ENCODE measurements at regions of chr16 and their contacts with region 1.

Region 1: GRCh38 chr16:85610508-85611332 is 2.4 kb upstream of the GSE1 start:
- DNase-seq: peak; percentile 90
- H3K4me3 Mint-ChIP-seq: peak overlapping the region; percentile 63
- H3K27ac Mint-ChIP-seq: peak overlapping the region; percentile 19
- H3K4me1 Mint-ChIP-seq: peaks cover 16% of the 10 kb centered on the region
- H3K27me3 Mint-ChIP-seq: no peaks in the 10 kb centered on the region
- CTCF ChIP-seq: peak; percentile 96

Region 2: GRCh38 chr16:85275533-85276249 is 335.0 kb before region 1 on chr16:
- CTCF ChIA-PET with region 1: interaction called, 41 read pairs
- POLR2A ChIA-PET with region 1: no interaction called
- intact Hi-C with region 1: loop called (anchors 1 kb)
- DNase-seq: peak; percentile 70
- H3K4me3 Mint-ChIP-seq: no peak overlapping the region
- H3K27ac Mint-ChIP-seq: no peak overlapping the region
- H3K4me1 Mint-ChIP-seq: no peaks in the 10 kb centered on the region
- H3K27me3 Mint-ChIP-seq: no peaks in the 10 kb centered on the region
- CTCF ChIP-seq: peak; percentile 89

Region 3: DNA sequence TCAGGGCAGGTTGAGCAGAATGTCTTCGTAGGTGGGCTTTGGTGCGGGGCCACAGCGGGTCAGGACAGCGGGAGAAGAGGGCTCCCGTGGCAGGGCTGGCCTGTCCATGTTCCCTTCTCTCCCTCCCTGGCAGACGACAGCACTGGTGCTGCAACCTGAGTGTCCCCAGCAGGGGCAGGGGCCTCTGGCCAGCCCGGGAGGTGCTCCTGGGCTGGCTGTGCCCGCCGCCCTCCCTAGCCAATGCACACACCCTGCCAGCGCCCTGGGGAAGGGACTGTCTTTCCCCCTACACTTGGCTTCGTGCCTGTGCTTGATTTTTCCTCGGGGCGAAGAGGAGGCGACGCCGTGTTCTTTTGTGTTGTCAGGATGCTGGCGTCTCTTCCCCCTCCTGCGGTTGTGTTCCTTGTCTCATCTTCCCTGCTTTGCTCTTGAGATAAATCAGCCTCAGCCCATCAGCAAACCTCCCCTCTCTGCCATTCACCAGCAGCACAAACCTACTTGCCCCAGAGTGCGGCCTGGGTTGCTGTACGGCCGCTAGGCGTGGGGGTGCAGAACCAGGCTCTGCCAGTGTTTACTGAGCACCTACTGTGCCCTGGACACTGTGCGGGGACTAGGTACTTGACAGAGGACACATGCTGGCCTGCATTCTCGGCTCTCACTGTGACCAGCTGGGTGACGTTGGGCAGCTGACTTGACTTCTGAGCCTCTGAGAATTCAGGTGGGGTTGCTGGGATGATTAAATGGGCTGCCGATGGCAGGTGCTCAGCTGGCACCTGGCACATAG is 261.2 kb before region 1 on chr16:
- CTCF ChIA-PET with region 1: no interaction called
- POLR2A ChIA-PET with region 1: interaction called, 3 read pairs
- intact Hi-C with region 1: loop called (anchors 2 kb)
- DNase-seq: no peak
- H3K4me3 Mint-ChIP-seq: no peak overlapping the region
- H3K27ac Mint-ChIP-seq: no peak overlapping the region
- H3K4me1 Mint-ChIP-seq: peaks cover 29% of the 10 kb centered on the region
- H3K27me3 Mint-ChIP-seq: no peaks in the 10 kb centered on the region
- CTCF ChIP-seq: no peak

Region 4: DNA sequence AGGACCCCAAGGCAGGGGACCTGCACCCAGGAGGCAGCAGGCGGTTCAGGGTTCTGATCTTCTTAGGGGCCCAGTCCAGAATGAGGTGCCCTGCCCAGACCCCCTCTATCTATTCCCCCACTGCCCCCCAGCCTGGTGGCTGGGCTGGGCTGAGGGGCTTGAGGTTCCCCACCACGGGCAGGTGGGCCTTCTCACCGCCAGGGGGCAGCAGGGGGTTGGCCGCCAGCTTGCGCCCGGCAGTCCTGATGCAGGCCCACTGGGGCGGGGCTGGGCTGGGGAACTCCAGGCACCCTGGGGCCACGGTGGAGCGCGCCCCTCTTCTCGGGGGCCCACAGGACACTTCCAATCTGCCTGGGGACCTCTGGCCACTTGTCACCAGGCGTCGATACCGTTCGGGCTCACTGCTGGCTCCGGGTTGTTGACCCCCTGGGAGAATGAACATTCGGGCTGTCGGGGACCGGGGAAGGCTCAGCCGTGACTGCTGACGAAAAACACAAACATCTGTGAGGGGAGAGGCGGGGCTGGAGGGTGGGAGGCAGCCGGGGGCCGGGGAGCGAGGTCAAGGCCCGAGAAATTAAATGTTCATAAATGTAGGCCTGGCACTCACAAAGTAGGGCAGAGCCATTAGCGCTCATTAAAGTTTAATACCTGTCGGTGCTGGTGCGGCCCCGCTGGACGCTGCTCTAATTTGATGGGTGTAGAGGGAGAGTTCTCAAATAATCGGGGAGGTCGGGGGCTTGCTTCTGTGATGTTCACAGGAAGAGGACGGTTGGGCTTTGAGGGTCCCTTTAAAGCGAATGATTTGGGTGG is 216.8 kb before region 1 on chr16:
- CTCF ChIA-PET with region 1: interaction called, 9 read pairs
- POLR2A ChIA-PET with region 1: interaction called, 13 read pairs
- intact Hi-C with region 1: no loop called
- DNase-seq: no peak
- H3K4me3 Mint-ChIP-seq: no peak overlapping the region
- H3K27ac Mint-ChIP-seq: no peak overlapping the region
- H3K4me1 Mint-ChIP-seq: peaks cover 47% of the 10 kb centered on the region
- H3K27me3 Mint-ChIP-seq: no peaks in the 10 kb centered on the region
- CTCF ChIP-seq: peak; percentile 44

Region 5: DNA sequence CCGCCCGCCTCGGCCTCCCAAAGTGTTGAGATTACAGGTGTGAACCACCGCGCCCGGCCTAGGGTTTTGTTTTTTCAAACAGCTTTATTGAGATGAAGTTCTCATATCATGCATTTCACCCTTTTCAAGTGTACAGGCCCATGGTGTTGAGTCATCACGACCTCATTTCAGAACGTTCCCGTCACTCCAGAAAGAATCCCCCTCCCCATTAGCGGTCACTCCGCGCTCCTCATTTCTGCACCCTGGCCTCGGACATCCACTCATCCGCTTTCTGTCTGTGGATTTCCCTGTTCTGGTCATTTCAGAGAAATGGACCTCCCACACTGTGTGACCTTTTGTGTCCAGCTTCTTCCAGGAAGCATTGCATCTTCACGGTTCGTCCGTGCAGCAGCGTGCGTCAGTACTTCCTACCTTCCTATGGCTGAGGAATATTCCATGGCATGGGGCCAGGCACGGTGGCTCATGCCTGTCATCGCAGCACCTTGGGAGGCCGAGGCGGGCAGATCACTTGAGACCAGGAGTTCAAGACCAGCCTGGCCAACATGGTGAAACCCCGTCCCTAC is 132.8 kb before region 1 on chr16:
- CTCF ChIA-PET with region 1: no interaction called
- POLR2A ChIA-PET with region 1: no interaction called
- intact Hi-C with region 1: no loop called
- DNase-seq: peak; percentile 20
- H3K4me3 Mint-ChIP-seq: no peak overlapping the region
- H3K27ac Mint-ChIP-seq: no peak overlapping the region
- H3K4me1 Mint-ChIP-seq: peaks cover 5% of the 10 kb centered on the region
- H3K27me3 Mint-ChIP-seq: peaks cover 7% of the 10 kb centered on the region
- CTCF ChIP-seq: no peak

Region 6: DNA sequence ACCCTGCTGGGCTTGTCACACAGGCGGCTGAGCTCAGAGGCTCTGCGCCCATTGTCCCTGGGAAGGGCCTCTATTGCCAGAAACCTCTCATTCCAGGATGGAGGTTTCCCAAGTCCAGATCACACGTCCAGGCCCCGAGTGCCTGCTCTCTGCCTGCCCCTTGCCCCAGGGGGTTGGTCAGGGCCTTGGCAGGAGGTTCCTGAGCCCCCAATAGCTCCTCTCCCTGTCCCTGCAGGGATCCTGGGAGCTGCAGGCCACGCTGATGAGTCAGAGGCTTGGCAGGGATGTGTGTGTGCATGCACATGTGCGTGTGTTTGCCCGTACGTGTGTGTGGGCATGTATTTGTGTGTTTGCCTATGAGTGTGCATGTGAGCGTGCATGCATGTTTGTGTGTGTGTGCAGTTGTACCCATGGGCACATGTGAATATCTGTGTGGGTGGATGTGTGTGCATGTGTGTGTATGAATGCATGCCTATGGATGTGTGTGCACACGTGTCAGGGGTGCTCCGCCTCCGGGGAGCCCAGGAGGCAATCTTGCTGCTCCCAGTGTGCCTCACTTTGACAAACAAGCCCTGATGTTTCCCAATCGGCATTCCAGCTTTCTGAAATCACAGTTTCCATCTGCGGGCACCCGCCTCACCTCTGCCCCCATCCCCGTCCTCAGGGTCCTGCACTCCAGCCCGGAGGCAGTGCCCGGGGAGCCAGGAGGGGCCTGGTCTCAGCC is 96.0 kb before region 1 on chr16:
- CTCF ChIA-PET with region 1: interaction called, 4 read pairs
- POLR2A ChIA-PET with region 1: interaction called, 9 read pairs
- intact Hi-C with region 1: loop called (anchors 2 kb)
- DNase-seq: peak; percentile 95
- H3K4me3 Mint-ChIP-seq: peak overlapping the region; percentile 4
- H3K27ac Mint-ChIP-seq: peak overlapping the region; percentile 86
- H3K4me1 Mint-ChIP-seq: peaks cover 17% of the 10 kb centered on the region
- H3K27me3 Mint-ChIP-seq: no peaks in the 10 kb centered on the region
- CTCF ChIP-seq: no peak

Region 7: DNA sequence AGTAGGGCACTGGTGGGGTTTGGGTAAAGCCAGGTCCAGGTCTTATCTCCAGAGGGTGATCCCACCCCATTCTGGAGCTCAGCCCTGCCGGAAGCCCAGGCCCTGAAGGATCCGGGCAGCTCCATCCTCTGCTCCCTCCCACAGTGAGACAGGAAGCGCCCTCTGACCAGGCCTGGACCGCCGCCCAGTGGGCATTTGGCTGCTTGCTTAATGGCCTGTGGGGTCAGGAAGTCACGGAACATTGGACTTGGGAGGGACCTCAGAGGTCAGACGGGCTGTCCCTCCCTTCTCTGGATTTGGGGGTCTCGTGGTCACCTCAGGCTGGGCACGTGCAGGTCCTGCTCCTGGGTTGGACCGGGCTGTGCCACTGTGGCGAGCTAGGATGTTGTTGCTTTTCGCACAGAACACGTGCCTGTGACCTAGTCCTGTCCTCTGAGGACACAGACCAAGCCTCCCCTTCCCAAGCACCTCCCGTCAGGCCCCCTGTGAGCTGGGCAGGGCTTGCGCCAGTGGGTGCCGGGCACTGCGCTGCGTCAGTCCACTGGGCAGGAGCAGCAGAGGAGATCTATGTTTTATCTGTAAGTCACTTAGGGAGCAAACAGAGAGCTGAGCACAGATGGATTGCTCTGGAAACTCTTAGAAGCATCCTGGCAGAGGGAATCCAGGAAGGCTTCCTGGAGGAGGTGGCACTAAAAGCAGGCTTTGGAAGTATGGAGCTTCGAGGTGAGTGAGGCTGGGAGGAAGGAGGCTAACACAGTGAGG is 47.0 kb before region 1 on chr16:
- CTCF ChIA-PET with region 1: interaction called, 18 read pairs
- POLR2A ChIA-PET with region 1: interaction called, 68 read pairs
- intact Hi-C with region 1: no loop called
- DNase-seq: no peak
- H3K4me3 Mint-ChIP-seq: no peak overlapping the region
- H3K27ac Mint-ChIP-seq: no peak overlapping the region
- H3K4me1 Mint-ChIP-seq: peaks cover 8% of the 10 kb centered on the region
- H3K27me3 Mint-ChIP-seq: no peaks in the 10 kb centered on the region
- CTCF ChIP-seq: no peak

Region 8: DNA sequence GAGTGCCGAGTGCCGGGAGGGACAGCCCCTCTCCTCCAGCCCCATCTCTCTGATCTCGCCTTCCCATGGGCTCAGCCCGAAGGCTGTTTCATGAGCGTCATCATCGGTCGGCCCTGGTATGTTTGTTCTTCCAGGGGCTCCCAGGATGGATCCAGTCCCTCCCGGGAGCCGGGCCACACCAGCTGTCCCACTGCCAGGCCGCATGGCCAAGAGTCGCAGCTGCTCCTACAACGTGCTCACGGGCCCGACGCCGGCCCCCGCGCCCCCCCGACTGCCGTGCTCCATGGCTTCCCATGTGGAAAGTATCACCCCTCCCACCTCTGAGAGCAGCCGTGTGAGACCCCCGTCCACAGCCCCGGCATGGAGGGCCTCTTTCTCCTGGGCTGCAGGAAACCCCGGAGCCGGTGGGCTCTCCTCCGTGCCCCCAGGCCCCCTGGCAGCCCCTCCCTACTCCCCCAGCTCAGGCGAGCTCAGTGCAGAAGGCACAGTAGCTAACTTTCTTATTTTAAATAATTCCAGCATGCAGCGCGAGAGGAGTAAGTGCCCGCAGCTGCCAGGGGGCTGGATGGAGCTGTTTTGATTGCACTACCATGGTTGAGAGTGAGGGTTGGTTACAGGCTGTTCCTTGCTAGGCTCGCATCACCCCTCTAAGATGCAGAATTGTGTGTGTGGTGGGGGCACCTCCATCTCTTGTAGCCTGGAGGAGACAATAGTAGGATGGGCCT is 24.2 kb before region 1 on chr16:
- CTCF ChIA-PET with region 1: no interaction called
- POLR2A ChIA-PET with region 1: no interaction called
- intact Hi-C with region 1: no loop called
- DNase-seq: no peak
- H3K4me3 Mint-ChIP-seq: no peak overlapping the region
- H3K27ac Mint-ChIP-seq: no peak overlapping the region
- H3K4me1 Mint-ChIP-seq: no peaks in the 10 kb centered on the region
- H3K27me3 Mint-ChIP-seq: no peaks in the 10 kb centered on the region
- CTCF ChIP-seq: no peak